ENCODE measurements at regions of chr2 and their contacts with region 1.

Region 1: DNA sequence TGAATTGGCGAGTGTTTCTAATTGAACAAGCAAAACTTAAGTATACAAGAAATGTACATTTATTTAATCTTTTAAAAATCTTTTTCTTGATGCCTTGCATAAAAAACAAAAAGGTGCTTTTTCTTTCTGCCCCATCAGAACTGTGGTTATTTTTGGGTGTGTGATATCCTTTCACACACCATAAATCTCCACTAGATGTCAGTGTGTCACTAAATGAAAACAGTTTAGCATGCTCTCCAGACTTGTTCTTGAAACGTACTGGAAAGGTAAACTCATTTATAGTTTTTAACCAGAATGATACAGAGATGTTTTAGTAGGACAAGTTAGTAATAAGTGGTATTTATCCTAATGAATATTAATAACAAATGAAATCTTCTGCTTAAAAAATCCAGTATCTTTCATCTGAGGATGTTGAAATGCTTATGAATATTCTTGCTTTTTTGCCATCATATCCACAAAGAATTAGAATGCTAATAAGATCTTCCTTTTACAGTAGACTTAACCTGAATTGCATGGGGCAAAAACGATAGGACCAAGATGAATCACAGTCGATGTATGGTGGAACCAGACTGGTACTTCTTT is 96.8 kb downstream of the UBE2E3 start:
- DNase-seq: no peak
- ATAC-seq: peak; percentile 48 to 60
- H3K4me3 ChIP-seq: no peak overlapping the region
- H3K27ac ChIP-seq: no peak overlapping the region
- H3K4me1 ChIP-seq: no peaks in the 10 kb centered on the region
- H3K27me3 ChIP-seq: no peaks in the 10 kb centered on the region
- CTCF ChIP-seq: peak; percentile 69

Region 2: GRCh38 chr2:180761224-180761623 is 316.0 kb before region 1 on chr2:
- intact Hi-C with region 1: no loop called
- DNase-seq: no peak
- ATAC-seq: no peak
- H3K4me3 ChIP-seq: no peak overlapping the region
- H3K27ac ChIP-seq: no peak overlapping the region
- H3K4me1 ChIP-seq: no peaks in the 10 kb centered on the region
- H3K27me3 ChIP-seq: no peaks in the 10 kb centered on the region
- CTCF ChIP-seq: no peak

Region 3: DNA sequence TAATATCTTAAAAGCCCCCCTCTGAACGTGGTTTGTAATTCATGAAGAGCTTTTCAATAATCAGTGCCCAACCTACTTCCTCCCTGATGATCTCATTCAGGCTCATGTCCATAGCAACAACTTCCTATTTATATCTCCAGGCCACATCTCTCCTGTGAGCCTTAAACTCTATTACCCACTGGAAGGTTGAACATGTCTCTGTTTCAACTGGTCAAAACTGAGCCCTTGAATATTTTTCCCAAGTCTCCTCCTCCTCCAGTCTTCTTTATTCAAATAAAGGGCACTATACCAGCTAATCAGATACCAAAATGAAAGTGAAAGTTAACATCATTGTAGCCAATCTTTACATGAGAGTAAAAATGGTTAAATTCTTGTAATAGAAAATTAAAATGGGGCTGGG is 316.3 kb after region 1 on chr2:
- intact Hi-C with region 1: no loop called
- DNase-seq: no peak
- ATAC-seq: peak; percentile 71 to 76
- H3K4me3 ChIP-seq: no peak overlapping the region
- H3K27ac ChIP-seq: peak overlapping the region; percentile 39
- H3K4me1 ChIP-seq: peaks cover 17% of the 10 kb centered on the region
- H3K27me3 ChIP-seq: no peaks in the 10 kb centered on the region
- CTCF ChIP-seq: no peak

Region 4: GRCh38 chr2:181715033-181715630 is 637.9 kb after region 1 on chr2:
- intact Hi-C with region 1: loop called (anchors 10 kb)
- DNase-seq: peak; percentile 52
- ATAC-seq: peak; percentile 79 to 80
- H3K4me3 ChIP-seq: no peak overlapping the region
- H3K27ac ChIP-seq: no peak overlapping the region
- H3K4me1 ChIP-seq: no peaks in the 10 kb centered on the region
- H3K27me3 ChIP-seq: no peaks in the 10 kb centered on the region
- CTCF ChIP-seq: peak; percentile 67